ENCODE measurements at regions of chr7 and their contacts with region 1.

Region 1: GRCh38 chr7:140972876-140973859 is 41.6 kb downstream of the MRPS33 start:
- DNase-seq: peak; percentile 25 to 45
- H3K4me3 ChIP-seq: no peak overlapping the region
- H3K4me3 Mint-ChIP-seq: no peak overlapping the region
- H3K27ac Mint-ChIP-seq: peak overlapping the region; percentile 4
- H3K4me1 ChIP-seq: peaks cover 33% of the 10 kb centered on the region
- H3K4me1 Mint-ChIP-seq: peaks cover 33% of the 10 kb centered on the region
- H3K27me3 ChIP-seq: no peaks in the 10 kb centered on the region
- H3K27me3 Mint-ChIP-seq: no peaks in the 10 kb centered on the region
- CTCF ChIP-seq: no peak

Region 2: GRCh38 chr7:140924019-140924820 is 48.9 kb before region 1 on chr7:
- CTCF ChIA-PET with region 1: no interaction called
- POLR2A ChIA-PET with region 1: no interaction called
- intact Hi-C with region 1: loop called (anchors 5 kb)
- DNase-seq: peak; percentile 81 to 83
- H3K4me3 ChIP-seq: peak overlapping the region; percentile 71
- H3K4me3 Mint-ChIP-seq: no peak overlapping the region
- H3K27ac Mint-ChIP-seq: no peak overlapping the region
- H3K4me1 ChIP-seq: no peaks in the 10 kb centered on the region
- H3K4me1 Mint-ChIP-seq: no peaks in the 10 kb centered on the region
- H3K27me3 ChIP-seq: no peaks in the 10 kb centered on the region
- H3K27me3 Mint-ChIP-seq: no peaks in the 10 kb centered on the region
- CTCF ChIP-seq: peak; percentile 47 to 57

Region 3: GRCh38 chr7:140989068-140989467 is 15.9 kb after region 1 on chr7:
- CTCF ChIA-PET with region 1: no interaction called
- POLR2A ChIA-PET with region 1: no interaction called
- intact Hi-C with region 1: loop called (anchors 1 kb)
- DNase-seq: peak; percentile 21 to 56
- H3K4me3 ChIP-seq: no peak overlapping the region
- H3K4me3 Mint-ChIP-seq: no peak overlapping the region
- H3K27ac Mint-ChIP-seq: no peak overlapping the region
- H3K4me1 ChIP-seq: peaks cover 32% of the 10 kb centered on the region
- H3K4me1 Mint-ChIP-seq: peaks cover 22% of the 10 kb centered on the region
- H3K27me3 ChIP-seq: no peaks in the 10 kb centered on the region
- H3K27me3 Mint-ChIP-seq: no peaks in the 10 kb centered on the region
- CTCF ChIP-seq: no peak

Region 4: DNA sequence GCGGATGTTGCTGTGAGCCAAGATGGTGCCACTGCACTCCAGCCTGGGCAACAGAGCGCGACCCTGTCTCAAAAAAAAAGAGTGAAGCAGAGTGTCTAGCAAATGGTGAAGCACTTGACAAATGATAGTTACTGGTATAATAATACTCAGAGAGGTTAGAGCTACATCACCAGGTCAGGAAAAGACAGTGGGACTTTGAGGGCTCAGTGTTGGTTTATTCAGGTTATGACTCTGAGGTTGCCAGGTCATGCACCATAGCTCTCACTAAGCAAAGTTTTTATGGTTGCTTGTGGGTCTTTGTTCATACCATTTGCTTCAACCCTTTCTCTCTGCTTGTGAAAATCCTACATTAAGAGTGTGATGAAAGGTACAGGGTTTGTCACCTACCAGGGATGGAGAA is 28.0 kb after region 1 on chr7:
- CTCF ChIA-PET with region 1: no interaction called
- POLR2A ChIA-PET with region 1: no interaction called
- intact Hi-C with region 1: loop called (anchors 2 kb)
- DNase-seq: peak in 1 of 2 experiments; percentile 8
- H3K4me3 ChIP-seq: no peak overlapping the region
- H3K4me3 Mint-ChIP-seq: peak overlapping the region; percentile 52
- H3K27ac Mint-ChIP-seq: peak overlapping the region; percentile 6
- H3K4me1 ChIP-seq: peaks cover 38% of the 10 kb centered on the region
- H3K4me1 Mint-ChIP-seq: peaks cover 30% of the 10 kb centered on the region
- H3K27me3 ChIP-seq: no peaks in the 10 kb centered on the region
- H3K27me3 Mint-ChIP-seq: no peaks in the 10 kb centered on the region
- CTCF ChIP-seq: no peak